PC-3 (cell line): ENCODE measurements at regions of chr5 and their contacts with region 1.

Region 1: GRCh38 chr5:157471709-157472108 is 11.7 kb downstream of the NIPAL4 start:
- DNase-seq: peak; percentile 72
- ATAC-seq: peak; percentile 37
- H3K4me3 ChIP-seq: no peak overlapping the region
- H3K27ac ChIP-seq: no peak overlapping the region
- H3K4me1 ChIP-seq: peaks cover 18% of the 10 kb centered on the region
- H3K27me3 ChIP-seq: no peaks in the 10 kb centered on the region
- CTCF ChIP-seq: peak; percentile 97

Region 2: DNA sequence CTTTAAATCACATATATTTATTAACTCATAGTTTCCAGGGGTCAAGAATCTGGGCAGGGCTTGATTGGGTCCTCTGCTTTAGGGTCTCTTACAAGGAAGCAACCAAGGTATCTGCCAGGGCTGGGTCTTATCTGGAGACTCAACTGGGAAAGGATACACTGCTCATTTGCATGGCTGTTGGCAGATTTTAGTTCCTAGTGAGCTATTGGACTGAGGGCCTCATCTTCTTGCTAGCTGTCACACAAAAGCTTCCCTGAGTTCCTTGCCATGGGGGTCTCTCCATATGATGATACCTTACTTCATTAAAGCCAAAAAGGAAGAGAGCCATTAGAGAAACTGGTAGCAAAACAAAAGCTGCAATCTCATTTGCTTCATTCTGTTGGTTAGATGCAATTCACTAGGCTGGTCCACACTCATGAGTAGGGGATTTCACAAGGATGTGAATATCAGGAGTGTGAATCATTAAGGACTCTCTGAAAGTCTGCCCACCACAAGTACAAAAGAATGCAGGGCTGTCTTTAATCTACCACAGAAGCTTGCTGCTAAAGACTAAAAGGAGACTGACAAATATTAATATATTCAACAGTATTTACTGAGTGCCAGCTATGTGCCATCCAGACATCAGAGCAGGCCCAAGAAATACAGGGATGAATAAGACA is 466.7 kb before region 1 on chr5:
- CTCF ChIA-PET with region 1: no interaction called
- POLR2A ChIA-PET with region 1: no interaction called
- intact Hi-C with region 1: no loop called
- DNase-seq: no peak
- ATAC-seq: no peak
- H3K4me3 ChIP-seq: no peak overlapping the region
- H3K27ac ChIP-seq: no peak overlapping the region
- H3K4me1 ChIP-seq: no peaks in the 10 kb centered on the region
- H3K27me3 ChIP-seq: 0 out of 2 replicates have a peak, but pooled peaks cover 4% of the 10 kb centered on the region
- CTCF ChIP-seq: no peak

Region 3: DNA sequence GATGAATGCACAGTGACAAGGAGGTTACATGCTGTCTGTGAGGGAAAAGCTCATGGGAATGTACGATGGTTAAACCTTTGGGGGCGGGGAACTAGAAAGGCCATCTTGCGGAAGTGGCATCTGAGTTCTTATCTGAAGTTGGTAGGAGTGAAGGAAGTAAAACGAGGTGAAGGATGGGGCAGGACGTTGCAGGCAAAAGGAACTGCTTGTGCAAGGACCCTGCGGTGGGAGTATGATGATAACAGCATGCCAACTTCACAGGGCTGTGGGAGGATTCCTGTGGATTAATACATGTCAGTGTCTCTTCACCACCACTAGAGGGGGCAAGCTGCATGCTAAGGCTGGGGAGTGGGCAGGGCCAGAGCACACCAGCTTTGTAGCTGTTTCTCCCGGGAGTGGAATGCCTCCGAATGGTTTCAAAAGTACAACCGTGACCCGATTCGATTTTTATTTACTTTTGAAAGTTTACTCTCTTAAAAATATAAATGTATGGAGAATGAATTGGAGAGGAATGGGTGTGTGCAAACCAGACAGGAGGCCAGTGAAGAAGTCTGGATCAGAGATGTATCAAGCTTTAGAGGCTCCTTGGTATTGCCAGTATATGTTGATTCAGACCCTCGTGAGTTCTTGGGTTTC is 143.3 kb before region 1 on chr5:
- CTCF ChIA-PET with region 1: interaction called, 32 read pairs
- POLR2A ChIA-PET with region 1: no interaction called
- intact Hi-C with region 1: no loop called
- DNase-seq: peak; percentile 90
- ATAC-seq: peak; percentile 100
- H3K4me3 ChIP-seq: peak overlapping the region; percentile 61
- H3K27ac ChIP-seq: no peak overlapping the region
- H3K4me1 ChIP-seq: peaks cover 13% of the 10 kb centered on the region
- H3K27me3 ChIP-seq: no peaks in the 10 kb centered on the region
- CTCF ChIP-seq: peak; percentile 99

Region 4: GRCh38 chr5:157378502-157378901 is 93.2 kb before region 1 on chr5:
- CTCF ChIA-PET with region 1: interaction called, 10 read pairs
- POLR2A ChIA-PET with region 1: interaction called, 6 read pairs
- intact Hi-C with region 1: no loop called
- DNase-seq: peak; percentile 36
- ATAC-seq: peak; percentile 81
- H3K4me3 ChIP-seq: no peak overlapping the region
- H3K27ac ChIP-seq: no peak overlapping the region
- H3K4me1 ChIP-seq: peaks cover 12% of the 10 kb centered on the region
- H3K27me3 ChIP-seq: no peaks in the 10 kb centered on the region
- CTCF ChIP-seq: peak; percentile 42

Region 5: DNA sequence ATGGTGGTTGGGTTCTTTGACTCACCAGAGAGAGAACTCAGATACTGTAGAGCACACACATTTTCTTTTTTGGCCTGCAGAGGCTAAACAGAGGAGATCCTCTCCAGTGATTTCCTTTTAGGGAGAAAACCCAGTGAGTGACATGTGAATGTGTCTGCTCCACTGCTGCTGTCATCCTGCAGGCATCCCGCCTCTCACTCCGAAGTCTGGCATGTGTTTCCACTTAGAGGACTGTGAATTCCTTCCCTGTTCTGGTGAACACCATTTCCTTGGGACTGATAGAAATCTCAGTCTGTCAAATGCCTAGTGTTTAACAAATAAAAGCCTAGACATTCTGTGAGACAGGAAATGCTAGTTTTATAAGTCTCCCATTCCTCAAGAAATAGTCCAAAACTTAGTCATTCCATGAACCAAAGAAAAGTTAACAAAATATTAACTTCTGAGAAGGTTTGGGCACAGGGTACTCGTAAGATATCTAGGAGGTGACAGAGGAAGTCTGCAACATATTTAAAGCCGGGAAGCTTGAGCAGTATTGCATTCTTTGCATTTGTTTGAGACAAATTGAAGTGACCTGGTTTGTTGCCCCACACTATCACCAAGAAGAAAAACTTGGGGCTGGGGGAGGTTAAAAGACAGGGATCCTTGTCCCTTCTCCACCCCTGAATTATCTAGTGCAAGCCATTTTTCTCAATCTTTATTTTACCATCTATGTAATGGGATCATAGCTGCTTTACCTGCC is 86.6 kb before region 1 on chr5:
- CTCF ChIA-PET with region 1: interaction called, 13 read pairs
- POLR2A ChIA-PET with region 1: no interaction called
- intact Hi-C with region 1: no loop called
- DNase-seq: peak; percentile 98
- ATAC-seq: peak; percentile 83
- H3K4me3 ChIP-seq: peak overlapping the region; percentile 9; the same call in 1 of the 2 replicates
- H3K27ac ChIP-seq: peak overlapping the region; percentile 71
- H3K4me1 ChIP-seq: peaks cover 75% of the 10 kb centered on the region
- H3K27me3 ChIP-seq: no peaks in the 10 kb centered on the region
- CTCF ChIP-seq: no peak